Naive thymus-derived CD8-positive, alpha-beta T cell (primary cell): ENCODE measurements at regions of chr17 and their contacts with region 1.

Region 1: DNA sequence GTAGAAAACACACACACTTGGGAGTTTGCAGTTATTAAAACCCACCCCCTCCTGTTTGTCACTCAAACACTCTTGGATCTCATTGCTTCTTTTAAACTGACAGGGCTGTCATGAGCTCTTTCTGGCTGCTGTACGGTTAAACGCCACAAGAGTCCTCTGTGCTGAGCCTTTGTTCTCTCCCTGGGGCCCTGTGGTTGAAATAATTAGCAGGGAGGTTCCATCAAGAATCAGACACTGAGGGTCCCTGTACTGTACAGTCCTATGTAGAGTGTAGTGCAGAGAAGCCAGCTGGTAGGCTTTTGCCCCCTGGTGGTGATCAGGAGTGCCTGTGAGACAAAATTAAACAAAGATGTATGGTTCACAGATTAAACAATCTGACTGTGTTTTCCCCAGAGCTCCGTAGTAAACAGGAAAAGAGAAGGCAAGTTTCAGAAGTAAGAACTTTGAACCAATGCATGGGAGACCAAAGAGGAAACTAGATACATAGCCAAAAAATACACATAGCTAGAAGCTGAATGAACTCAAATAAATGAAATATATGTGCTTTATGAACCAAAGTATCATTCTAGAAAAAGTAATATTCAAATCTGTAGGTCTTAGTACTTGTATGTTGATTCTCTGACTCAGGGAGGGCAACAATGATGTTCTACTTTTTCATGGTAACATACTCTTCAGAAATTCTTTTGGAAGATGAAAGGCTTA is 1.4 kb upstream of the SSH2 start:
- DNase-seq: peak; percentile 30 to 87 (median 75)
- ATAC-seq: peak; percentile 67 to 81
- H3K4me3 Mint-ChIP-seq: no peak overlapping the region
- H3K27ac Mint-ChIP-seq: no peak overlapping the region
- H3K4me1 Mint-ChIP-seq: peaks cover 21 to 33% (median 25%) of the 10 kb centered on the region in 4 donors
- H3K27me3 Mint-ChIP-seq: no peaks in the 10 kb centered on the region

Region 2: DNA sequence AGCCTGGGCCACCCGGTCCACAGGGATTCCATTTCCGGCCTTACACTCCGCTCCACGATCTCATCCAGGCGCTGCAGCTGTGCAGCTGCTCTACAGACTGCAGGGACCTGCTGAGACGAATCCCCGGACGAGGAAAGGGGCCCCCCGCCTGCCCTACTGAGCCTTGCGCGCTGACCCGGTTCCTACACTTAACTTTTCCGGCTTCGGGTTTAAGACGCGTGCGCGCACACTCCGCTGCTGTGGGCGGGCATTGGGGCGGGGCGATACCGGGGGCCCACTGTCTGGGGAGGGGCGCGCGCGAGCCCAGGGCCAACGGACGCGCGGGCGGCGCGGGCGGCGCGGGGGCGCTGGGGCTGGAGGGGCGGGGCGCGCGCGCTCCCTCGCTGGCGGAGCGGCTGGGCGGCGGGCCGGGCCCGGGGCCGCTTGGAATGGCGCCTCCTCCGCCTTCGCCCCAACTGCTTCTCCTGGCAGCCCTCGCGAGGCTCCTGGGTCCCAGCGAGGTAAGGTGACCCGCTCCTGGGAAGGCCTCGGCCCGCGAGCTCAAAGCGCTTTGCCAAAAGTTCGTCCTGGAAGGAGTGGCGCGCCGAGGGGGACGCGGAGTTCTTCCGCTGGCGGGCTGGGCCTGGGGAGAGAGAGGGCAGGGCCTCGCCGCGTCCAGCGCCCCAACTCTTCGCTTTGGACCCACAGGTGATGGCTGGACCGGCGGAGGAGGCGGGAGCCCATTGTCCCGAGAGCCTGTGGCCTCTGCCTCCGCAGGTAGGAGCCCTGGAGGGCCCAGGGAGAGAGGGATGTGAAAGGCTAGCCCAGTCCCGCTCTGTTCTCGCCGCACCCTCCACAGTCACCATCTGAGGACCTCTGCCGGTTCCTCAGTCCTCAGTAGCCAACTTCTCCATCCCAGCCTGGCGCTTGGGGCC is 362.8 kb before region 1 on chr17 and contains the start of gene TP53I13:
- POLR2A ChIA-PET with region 1: interaction called, 12 read pairs
- DNase-seq: peak; percentile 72 to 93 (median 83)
- ATAC-seq: peak; percentile 65 to 66
- H3K4me3 Mint-ChIP-seq: peak within 1 kb of the TSS; percentile 91 to 99 (median 96)
- H3K27ac Mint-ChIP-seq: peak within 1 kb of the TSS; percentile 76 to 99 (median 95)
- H3K4me1 Mint-ChIP-seq: peaks cover 28 to 41% (median 39%) of the 10 kb centered on the region in 4 donors
- H3K27me3 Mint-ChIP-seq: no peaks in the 10 kb centered on the region
- polyA plus RNA-seq, gene TP53I13: 22.7 to 26.8 (median 25.5) TPM

Region 3: GRCh38 chr17:29807520-29808351 is 123.6 kb before region 1 on chr17:
- POLR2A ChIA-PET with region 1: interaction called, 65 read pairs
- DNase-seq: peak; percentile 48 to 83 (median 68)
- ATAC-seq: peak; percentile 80 to 90
- H3K4me3 Mint-ChIP-seq: peak overlapping the region in 1 of 10 donors; percentile 8
- H3K27ac Mint-ChIP-seq: peak overlapping the region in 1 of 10 donors; percentile 22
- H3K4me1 Mint-ChIP-seq: peaks cover 3 to 26% (median 20%) of the 10 kb centered on the region in 4 donors
- H3K27me3 Mint-ChIP-seq: no peaks in the 10 kb centered on the region

Region 4: GRCh38 chr17:29867643-29868181 is 63.7 kb before region 1 on chr17:
- POLR2A ChIA-PET with region 1: interaction called, 11 read pairs
- DNase-seq: no peak
- ATAC-seq: no peak
- H3K4me3 Mint-ChIP-seq: no peak overlapping the region
- H3K27ac Mint-ChIP-seq: peak overlapping the region in 3 of 10 donors; percentile 0 to 38 (median 1)
- H3K4me1 Mint-ChIP-seq: peaks cover 15 to 40% (median 27%) of the 10 kb centered on the region in 4 donors
- H3K27me3 Mint-ChIP-seq: no peaks in the 10 kb centered on the region